ENCODE measurements at regions of chr1 and their contacts with region 1.

Region 1: DNA sequence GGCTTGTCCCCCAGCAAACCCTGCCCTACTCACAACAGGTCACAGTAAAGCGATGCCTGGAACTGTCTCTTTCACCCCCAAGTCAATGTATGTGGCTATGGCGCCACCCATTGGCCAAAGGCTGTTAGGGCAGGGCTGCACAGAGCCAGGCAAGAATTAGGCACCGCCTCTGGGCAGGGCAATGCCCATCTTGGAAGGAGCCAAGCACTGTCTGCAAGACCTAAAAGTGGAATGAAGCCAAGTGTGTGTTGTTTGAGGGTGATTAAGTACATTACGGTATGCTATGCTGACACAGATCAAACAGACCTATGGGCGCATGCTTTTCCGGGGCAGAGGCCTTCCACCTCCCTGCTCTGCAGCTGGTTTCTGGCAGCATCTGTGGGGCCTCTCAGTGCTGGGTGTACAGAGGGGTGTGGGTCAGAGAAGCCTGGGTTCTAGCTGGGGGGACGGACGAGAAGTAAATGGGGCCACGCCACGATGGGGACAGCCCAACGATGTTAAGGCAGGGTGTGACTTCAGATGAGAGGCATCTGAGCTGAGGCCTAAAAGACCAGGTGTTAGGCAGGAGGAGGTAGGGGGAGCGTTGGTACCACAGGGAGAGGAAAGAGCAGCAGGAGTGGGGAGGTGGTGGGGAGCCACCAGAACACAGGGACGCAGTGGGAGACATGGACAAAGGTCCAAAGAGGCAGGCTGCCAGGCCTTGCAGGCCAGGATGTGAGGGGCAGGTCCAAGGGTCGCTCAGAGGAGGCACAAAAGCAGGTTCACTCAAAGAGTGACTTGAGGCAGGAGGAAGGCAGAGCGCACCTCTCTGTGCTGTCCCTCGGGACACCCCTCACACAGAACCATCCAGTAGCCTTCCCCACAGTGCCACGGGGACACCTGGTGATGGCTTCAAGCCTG is 49.8 kb downstream of the ACOT7 start:
- DNase-seq: peak; percentile 75
- ATAC-seq: peak; percentile 89

Region 2: DNA sequence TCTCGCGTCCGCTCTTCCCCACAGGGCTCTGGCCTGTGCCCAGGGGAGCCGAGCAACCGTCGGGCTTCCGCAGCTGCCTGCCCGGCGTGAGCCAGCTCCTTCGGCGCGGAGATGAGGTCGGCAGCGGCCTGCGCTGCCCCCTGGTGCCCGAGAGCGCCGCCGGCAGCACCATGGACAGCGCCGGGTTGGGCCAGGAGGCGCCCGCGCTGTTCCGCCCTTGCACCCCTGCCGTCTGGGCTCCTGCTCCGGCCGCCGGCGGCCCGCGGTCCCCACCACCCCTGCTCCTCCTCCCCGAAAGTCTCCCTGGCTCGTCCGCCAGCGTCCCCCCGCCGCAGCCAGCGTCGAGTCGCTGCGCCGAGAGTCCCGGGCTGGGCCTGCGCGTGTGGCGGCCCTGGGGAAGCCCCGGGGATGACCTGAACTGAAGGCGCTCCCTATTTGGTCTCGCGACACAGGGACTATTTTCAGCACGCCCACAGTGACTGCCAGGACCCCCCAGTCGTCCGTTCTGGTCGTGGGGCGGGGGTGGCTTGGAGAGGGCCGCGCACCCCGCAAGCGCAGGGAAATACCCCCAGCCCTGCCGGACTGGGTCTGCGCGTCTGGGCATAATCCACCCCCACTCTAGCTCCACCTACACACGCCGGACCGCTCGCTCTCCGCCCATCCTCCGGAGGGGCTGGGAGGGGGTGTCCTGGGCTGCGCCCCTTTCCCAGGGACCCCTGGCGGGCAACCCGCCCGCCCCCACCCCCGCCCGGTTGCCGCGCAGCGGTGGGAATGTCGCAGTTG is 98.5 kb before region 1 on chr1:
- intact Hi-C with region 1: loop called (anchors 2 kb)
- DNase-seq: peak; percentile 88
- ATAC-seq: peak; percentile 83

Region 3: GRCh38 chr1:6409053-6409452 is 65.3 kb after region 1 on chr1:
- intact Hi-C with region 1: loop called (anchors 5 kb)
- DNase-seq: no peak
- ATAC-seq: no peak

Measured in Right ventricle myocardium superior (tissue), 1 donor.